Dorsolateral prefrontal cortex (tissue), 120 donors: ENCODE measurements at regions of chr13 and their contacts with region 1.

Region 1: GRCh38 chr13:42814868-42815267 is 33.5 kb downstream of the FAM216B start:
- DNase-seq: no peak
- H3K4me3 ChIP-seq: no peak overlapping the region
- H3K27ac ChIP-seq: no peak overlapping the region
- H3K27me3 ChIP-seq: peaks cover 0 to 29% (median 3%) of the 10 kb centered on the region in 45 donors
- CTCF ChIP-seq: no peak

Region 2: DNA sequence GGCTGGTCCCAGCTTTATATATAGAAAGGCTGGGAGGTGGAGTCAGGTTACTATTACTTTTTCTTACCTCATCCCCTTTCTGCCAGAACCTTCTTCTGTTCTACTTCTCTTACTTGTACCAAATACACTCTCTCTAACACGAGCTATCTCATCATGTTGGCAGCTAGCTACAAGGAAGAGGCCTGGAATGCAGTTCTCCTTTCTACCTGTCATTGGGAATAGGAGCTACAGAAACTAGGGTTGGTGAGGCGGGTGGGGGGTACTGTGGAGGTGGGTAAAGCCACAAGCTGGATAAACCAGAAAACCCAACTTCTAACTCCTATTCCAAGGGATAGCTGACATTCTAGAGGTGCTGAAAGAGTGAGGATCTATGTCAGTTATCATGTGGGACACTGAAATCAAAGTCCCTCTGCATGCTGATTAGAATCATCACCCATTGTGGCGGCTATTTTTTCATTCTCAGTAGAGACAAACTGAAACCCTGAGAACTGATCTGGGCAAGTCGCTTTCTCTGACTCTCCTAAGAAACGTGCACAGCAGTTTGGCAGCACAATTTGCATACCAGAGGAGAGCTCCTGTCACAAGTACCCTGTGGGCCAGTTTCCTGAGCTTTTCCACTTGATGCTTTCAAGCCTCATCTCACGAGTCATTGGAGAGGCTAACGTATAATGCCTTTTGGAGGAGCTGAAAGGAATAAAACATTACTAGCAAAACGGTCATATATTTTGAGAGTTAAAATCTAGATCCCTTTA is 613.9 kb after region 1 on chr13:
- intact Hi-C with region 1: loop called in 1 of 2 experiments (anchors 10 kb)
- DNase-seq: no peak
- H3K4me3 ChIP-seq: no peak overlapping the region
- H3K27ac ChIP-seq: no peak overlapping the region
- H3K27me3 ChIP-seq: no peaks in the 10 kb centered on the region
- CTCF ChIP-seq: no peak